Activated CD8-positive, alpha-beta T cell treated with anti-CD3 and anti-CD28 coated beads for 36 hours (primary cell): ENCODE measurements at regions of chr14 and their contacts with region 1.

Region 1: GRCh38 chr14:22994762-22995275 is 12.5 kb upstream of the AJUBA start:
- DNase-seq: peak; percentile 57
- ATAC-seq: peak; percentile 94
- H3K4me3 Mint-ChIP-seq: no peak overlapping the region
- H3K27ac Mint-ChIP-seq: no peak overlapping the region
- H3K4me1 Mint-ChIP-seq: peaks cover 3% of the 10 kb centered on the region
- H3K27me3 Mint-ChIP-seq: no peaks in the 10 kb centered on the region
- CTCF ChIP-seq: peak; percentile 59

Region 2: DNA sequence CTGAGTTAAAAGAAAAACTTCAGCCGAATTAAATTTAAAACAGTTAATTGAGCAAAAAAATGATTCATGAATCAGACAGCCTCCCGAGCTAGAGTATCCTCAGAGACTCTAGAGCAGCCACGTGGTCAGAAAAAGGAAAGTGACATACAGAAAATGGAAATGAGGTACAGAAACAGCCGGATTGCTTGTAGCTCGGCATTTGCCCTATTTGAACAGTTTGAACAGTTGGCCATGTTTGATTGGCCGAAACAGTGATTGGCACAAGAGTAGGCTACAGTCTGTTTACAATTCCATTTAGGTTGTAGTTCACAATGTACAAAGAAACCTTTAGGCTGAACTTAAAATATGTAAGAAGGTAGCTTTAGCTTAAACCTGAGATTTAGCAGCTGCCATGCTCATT is 241.2 kb before region 1 on chr14:
- CTCF ChIA-PET with region 1: no interaction called
- POLR2A ChIA-PET with region 1: no interaction called
- intact Hi-C with region 1: no loop called
- DNase-seq: no peak
- ATAC-seq: no peak
- H3K4me3 Mint-ChIP-seq: no peak overlapping the region
- H3K27ac Mint-ChIP-seq: no peak overlapping the region
- H3K4me1 Mint-ChIP-seq: peaks cover 5% of the 10 kb centered on the region
- H3K27me3 Mint-ChIP-seq: peaks cover 12% of the 10 kb centered on the region
- CTCF ChIP-seq: no peak

Region 3: DNA sequence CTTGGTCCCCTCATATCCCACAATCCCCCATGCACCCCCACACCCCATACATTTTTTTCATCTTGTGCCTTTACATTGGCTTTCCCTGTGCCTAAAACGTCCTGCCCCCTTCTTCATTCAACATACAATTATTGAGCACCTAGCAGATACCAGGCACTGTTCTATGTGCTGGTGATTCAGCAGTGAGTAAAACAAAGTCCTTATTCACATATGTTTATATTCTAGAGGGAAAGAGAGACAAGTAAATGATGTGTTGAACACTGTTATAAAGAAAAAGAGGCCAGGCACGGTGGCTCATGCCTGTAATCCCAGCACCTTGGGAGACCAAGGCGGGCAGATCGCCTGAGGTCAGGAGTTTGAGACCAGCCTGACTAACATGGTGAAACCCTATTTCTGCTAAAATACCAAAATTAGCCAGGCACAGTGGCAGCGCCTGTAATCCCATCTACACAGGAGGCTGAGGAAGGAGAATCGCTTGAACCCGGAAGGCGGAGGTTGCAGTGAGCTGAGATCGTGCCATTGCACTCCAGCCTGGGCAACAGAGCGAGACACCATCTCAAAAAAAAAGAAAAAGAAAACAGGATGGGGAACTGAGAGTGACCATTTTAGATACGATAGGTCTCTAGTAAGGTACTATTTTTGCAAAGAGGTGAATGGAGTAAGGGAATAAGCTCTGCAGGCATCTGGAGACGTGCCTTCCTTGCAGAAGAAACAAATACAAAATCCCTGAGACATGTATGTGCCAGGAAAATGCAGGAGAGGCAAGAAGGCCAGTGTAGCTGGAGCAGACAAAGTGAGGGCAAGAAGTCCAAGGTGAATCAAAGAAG is 191.7 kb before region 1 on chr14:
- CTCF ChIA-PET with region 1: no interaction called
- POLR2A ChIA-PET with region 1: no interaction called
- intact Hi-C with region 1: no loop called
- DNase-seq: no peak
- ATAC-seq: no peak
- H3K4me3 Mint-ChIP-seq: no peak overlapping the region
- H3K27ac Mint-ChIP-seq: no peak overlapping the region
- H3K4me1 Mint-ChIP-seq: no peaks in the 10 kb centered on the region
- H3K27me3 Mint-ChIP-seq: peaks cover 29% of the 10 kb centered on the region
- CTCF ChIP-seq: no peak

Region 4: GRCh38 chr14:22966783-22967269 is 28.0 kb before region 1 on chr14:
- CTCF ChIA-PET with region 1: interaction called, 58 read pairs
- POLR2A ChIA-PET with region 1: no interaction called
- intact Hi-C with region 1: no loop called
- DNase-seq: no peak
- ATAC-seq: no peak
- H3K4me3 Mint-ChIP-seq: no peak overlapping the region
- H3K27ac Mint-ChIP-seq: no peak overlapping the region
- H3K4me1 Mint-ChIP-seq: no peaks in the 10 kb centered on the region
- H3K27me3 Mint-ChIP-seq: no peaks in the 10 kb centered on the region
- CTCF ChIP-seq: no peak

Region 5: DNA sequence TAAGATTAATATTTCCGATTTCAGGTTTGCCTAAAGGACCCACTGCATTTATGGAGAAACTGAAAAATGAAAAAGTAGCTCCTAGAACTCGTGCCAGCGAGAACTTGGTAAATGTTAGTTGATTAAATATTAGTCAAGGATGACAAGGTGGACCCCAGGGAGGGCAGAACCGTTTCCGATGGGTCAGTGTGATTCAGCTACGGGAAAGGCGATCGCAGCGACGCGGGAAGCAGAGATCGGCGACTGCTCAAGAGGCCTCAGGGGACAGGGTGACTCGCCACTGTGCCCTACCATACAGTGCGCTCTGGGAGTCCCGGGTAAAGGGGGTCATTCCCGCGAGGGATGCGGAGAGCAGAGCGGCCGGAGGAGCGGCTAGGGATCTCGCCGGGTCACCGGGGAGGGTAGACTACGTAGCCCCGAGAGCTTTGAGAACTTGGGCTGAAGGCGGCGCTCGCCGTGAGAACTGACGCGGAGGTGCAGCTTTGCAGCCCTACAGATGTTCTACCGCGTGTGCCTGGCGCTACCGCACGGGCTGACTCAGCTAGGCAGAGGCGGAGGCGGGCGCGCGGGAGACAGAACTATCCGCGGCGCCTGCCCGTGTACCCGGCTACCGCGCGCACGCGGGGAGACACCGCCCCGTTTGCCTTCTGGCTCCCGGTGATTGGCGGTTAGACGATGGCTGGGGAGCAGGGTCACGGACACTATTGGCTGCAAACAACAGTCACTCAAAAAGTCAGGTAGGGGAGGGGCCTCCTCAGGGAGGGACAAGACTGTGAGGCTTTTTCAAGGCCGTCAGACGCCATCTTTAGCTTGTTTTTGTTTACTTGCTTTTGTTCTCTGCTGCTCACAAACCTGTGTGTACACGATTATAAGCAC is 12.0 kb after region 1 on chr14:
- CTCF ChIA-PET with region 1: interaction called, 65 read pairs
- POLR2A ChIA-PET with region 1: interaction called, 32 read pairs
- intact Hi-C with region 1: no loop called
- DNase-seq: peak; percentile 98
- ATAC-seq: peak; percentile 96
- H3K4me3 Mint-ChIP-seq: peak overlapping the region; percentile 91
- H3K27ac Mint-ChIP-seq: peak overlapping the region; percentile 97
- H3K4me1 Mint-ChIP-seq: peaks cover 34% of the 10 kb centered on the region
- H3K27me3 Mint-ChIP-seq: no peaks in the 10 kb centered on the region
- CTCF ChIP-seq: peak; percentile 39

Region 6: DNA sequence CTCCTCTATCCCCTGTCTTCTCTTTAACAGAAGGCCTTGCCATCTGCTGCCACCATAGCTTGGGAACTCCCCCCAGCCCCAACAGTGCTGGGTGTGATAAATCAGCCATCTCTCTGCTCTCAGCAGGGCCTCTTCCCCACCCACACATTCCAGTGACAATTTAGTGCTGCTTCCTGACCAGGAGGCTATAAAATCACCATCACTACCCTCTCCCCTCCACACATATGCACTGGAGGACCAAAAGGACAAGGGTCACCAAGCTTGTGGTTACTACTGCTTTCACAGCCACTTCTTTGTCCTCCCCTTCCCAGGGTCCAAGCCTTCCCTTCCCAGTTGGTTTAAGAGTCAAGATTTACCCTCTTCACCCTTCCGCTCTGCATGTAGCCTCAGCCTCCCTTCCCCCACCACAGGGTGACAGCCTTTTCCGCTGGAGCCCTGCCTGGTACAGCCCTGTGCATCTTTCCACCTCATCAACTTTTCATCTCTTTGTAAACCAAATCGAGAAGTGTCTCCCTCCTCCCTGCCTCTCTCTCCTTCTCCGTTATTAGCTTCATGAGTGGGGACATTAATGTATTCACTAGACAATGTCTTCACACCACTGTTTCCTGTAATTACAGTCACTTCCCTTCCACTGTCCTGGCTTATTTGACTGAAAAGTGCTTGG is 30.5 kb after region 1 on chr14:
- CTCF ChIA-PET with region 1: interaction called, 22 read pairs
- POLR2A ChIA-PET with region 1: interaction called, 5 read pairs
- intact Hi-C with region 1: no loop called
- DNase-seq: peak; percentile 61
- ATAC-seq: peak; percentile 74
- H3K4me3 Mint-ChIP-seq: peak overlapping the region; percentile 3
- H3K27ac Mint-ChIP-seq: peak overlapping the region; percentile 84
- H3K4me1 Mint-ChIP-seq: peaks cover 65% of the 10 kb centered on the region
- H3K27me3 Mint-ChIP-seq: no peaks in the 10 kb centered on the region
- CTCF ChIP-seq: no peak

Region 7: DNA sequence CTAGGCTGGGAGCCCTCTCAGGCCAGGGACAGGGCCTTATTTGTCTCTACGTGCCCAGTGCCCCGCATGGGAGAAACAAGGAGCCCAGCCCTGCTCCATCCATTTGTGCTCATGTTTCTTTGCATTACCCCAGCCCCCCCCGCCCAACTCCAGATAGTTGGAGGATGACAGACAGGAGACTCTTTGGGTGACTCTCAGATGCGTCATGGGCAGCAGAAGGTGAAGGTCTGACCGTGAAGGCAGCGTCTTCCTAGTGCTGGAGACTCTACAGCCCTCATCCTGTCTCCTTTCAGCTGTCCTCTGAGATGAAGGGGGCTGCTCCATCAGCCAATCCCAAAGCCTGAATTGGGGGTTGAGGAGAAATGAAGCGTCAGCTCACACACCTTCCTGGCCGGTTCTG is 46.9 kb after region 1 on chr14:
- CTCF ChIA-PET with region 1: interaction called, 12 read pairs
- POLR2A ChIA-PET with region 1: no interaction called
- intact Hi-C with region 1: no loop called
- DNase-seq: no peak
- ATAC-seq: no peak
- H3K4me3 Mint-ChIP-seq: no peak overlapping the region
- H3K27ac Mint-ChIP-seq: no peak overlapping the region
- H3K4me1 Mint-ChIP-seq: peaks cover 1% of the 10 kb centered on the region
- H3K27me3 Mint-ChIP-seq: no peaks in the 10 kb centered on the region
- CTCF ChIP-seq: no peak